ENCODE measurements at regions of chr7 and their contacts with region 1.

Region 1: DNA sequence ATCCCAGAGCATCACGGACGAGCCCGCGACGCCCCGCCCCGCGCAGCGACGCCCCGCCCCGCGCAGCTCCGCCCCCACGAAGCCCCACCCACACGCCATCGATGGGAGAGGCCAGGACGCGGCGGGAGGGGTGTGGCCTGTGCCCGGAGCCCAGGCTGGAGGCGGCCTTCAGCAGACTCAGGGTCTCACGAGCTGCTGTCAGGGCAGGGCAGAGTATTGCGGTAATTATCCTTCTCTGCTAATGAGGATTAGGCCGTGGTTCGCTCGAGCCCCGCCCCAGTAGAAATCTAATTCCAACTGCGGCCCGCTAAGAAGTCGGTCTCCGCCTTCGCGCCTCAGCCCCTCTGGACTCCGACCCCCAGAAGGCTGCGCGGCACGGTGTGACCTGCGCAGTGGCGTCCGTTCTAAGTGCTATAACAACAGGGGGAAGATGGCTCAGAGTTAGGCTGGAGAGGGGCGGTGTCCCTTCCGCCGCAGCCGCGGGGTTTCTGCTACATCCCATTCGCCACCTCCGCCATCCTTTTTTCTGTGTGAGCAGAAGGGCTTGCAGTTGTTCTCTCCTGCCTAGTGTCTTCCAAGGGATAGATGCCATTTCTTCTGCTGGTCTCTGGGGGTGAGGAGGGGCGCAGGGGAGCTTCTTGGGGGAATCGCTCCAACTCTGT is 337 bp upstream of the NT5C3A start:
- DNase-seq: peak; percentile 98
- ATAC-seq: peak; percentile 93
- H3K4me3 ChIP-seq: peak overlapping the region; percentile 19 to 92 (median 75)
- H3K4me3 Mint-ChIP-seq: peak overlapping the region; percentile 91
- H3K27ac ChIP-seq: peak overlapping the region; percentile 68 to 79
- H3K27ac Mint-ChIP-seq: peak overlapping the region; percentile 94
- H3K4me1 ChIP-seq: peaks cover 30% of the 10 kb centered on the region in 2 donors
- H3K4me1 Mint-ChIP-seq: peaks cover 39% of the 10 kb centered on the region
- H3K27me3 ChIP-seq: no peaks in the 10 kb centered on the region
- H3K27me3 Mint-ChIP-seq: no peaks in the 10 kb centered on the region
- CTCF ChIP-seq: no peak

Region 2: GRCh38 chr7:32490127-32490822 is 572.6 kb before region 1 on chr7 and contains the start of gene LSM5:
- CTCF ChIA-PET with region 1: interaction called, 3 read pairs
- POLR2A ChIA-PET with region 1: interaction called, 7 read pairs
- intact Hi-C with region 1: loop called (anchors 1 kb)
- DNase-seq: peak; percentile 94
- ATAC-seq: peak; percentile 57
- H3K4me3 ChIP-seq: peak within 1 kb of the TSS; percentile 81 to 97 (median 91)
- H3K4me3 Mint-ChIP-seq: peak within 1 kb of the TSS; percentile 91
- H3K27ac ChIP-seq: peak within 1 kb of the TSS; percentile 78 to 87
- H3K27ac Mint-ChIP-seq: peak within 1 kb of the TSS; percentile 91
- H3K4me1 ChIP-seq: peaks cover 8 to 16% of the 10 kb centered on the region in 2 donors
- H3K4me1 Mint-ChIP-seq: peaks cover 28% of the 10 kb centered on the region
- H3K27me3 ChIP-seq: no peaks in the 10 kb centered on the region
- H3K27me3 Mint-ChIP-seq: no peaks in the 10 kb centered on the region
- CTCF ChIP-seq: no peak
- total RNA-seq, gene LSM5: 32.1 and 34.7 TPM in 2 replicates

Region 3: GRCh38 chr7:32891800-32892520 is 171.0 kb before region 1 on chr7:
- CTCF ChIA-PET with region 1: interaction called, 3 read pairs
- POLR2A ChIA-PET with region 1: interaction called, 15 read pairs
- intact Hi-C with region 1: loop called (anchors 1 kb)
- DNase-seq: peak; percentile 99
- ATAC-seq: peak; percentile 64
- H3K4me3 ChIP-seq: peak overlapping the region; percentile 18 to 82 (median 74)
- H3K4me3 Mint-ChIP-seq: peak overlapping the region; percentile 87
- H3K27ac ChIP-seq: peak overlapping the region; percentile 98 to 100
- H3K27ac Mint-ChIP-seq: peak overlapping the region; percentile 96
- H3K4me1 ChIP-seq: peaks cover 36 to 39% of the 10 kb centered on the region in 2 donors
- H3K4me1 Mint-ChIP-seq: peaks cover 46% of the 10 kb centered on the region
- H3K27me3 ChIP-seq: no peaks in the 10 kb centered on the region
- H3K27me3 Mint-ChIP-seq: peaks cover 2% of the 10 kb centered on the region
- CTCF ChIP-seq: no peak

Region 4: GRCh38 chr7:33050535-33051318 is 12.2 kb before region 1 on chr7:
- CTCF ChIA-PET with region 1: interaction called, 18 read pairs
- POLR2A ChIA-PET with region 1: no interaction called
- intact Hi-C with region 1: loop called (anchors 1 kb)
- DNase-seq: peak; percentile 73
- ATAC-seq: peak; percentile 70
- H3K4me3 ChIP-seq: peak overlapping the region in 2 of 5 experiments; percentile 40 to 48
- H3K4me3 Mint-ChIP-seq: peak overlapping the region; percentile 29
- H3K27ac ChIP-seq: peak overlapping the region; percentile 60 to 83
- H3K27ac Mint-ChIP-seq: peak overlapping the region; percentile 28
- H3K4me1 ChIP-seq: peaks cover 39 to 47% of the 10 kb centered on the region in 2 donors
- H3K4me1 Mint-ChIP-seq: peaks cover 55% of the 10 kb centered on the region
- H3K27me3 ChIP-seq: no peaks in the 10 kb centered on the region
- H3K27me3 Mint-ChIP-seq: no peaks in the 10 kb centered on the region
- CTCF ChIP-seq: peak; percentile 76

Region 5: DNA sequence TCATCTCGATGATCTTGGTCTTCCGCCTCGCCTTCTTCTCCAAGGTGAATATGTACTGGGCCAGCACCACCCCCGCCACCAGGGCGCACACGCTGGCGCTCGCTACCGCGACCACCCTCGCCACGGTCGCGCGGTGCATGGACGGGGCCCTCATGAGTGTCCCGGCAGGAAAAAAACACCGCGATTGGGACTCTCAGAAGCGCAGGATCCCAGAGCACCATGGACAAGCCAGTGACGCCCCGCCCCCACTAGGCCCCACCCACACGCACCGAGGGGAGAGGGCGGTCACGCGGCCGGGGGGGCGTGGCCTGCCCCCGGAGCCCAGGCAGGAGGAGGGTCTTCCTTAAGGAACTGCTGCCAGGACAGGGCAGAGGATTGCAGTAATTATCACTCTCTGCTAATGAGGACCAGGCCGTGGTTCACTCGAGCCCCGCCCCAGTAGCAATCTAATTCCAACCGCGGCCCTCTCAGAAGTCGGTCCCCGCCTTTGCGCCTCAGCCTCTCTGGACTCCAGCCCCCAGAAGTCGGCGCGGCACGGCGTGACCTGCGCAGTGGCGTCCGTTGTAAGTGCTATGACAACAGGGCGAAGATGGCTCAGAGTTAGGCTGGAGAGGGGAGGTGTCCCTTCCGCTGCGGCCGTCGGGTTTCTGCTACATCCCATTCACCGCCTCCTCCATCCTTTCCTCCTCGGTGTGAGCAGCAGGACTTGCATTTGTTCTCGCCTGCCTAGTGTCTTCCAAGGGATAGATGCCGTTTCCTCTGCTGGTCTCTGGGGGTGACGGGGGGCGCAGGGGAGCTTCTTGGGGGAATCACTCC is 66.3 kb after region 1 on chr7 and contains the start of gene BBS9:
- CTCF ChIA-PET with region 1: no interaction called
- POLR2A ChIA-PET with region 1: no interaction called
- intact Hi-C with region 1: loop called (anchors 1 kb)
- DNase-seq: peak; percentile 96
- ATAC-seq: peak; percentile 91
- H3K4me3 ChIP-seq: peak within 1 kb of the TSS; percentile 39 to 81 (median 62)
- H3K4me3 Mint-ChIP-seq: peak within 1 kb of the TSS; percentile 97
- H3K27ac ChIP-seq: peak within 1 kb of the TSS; percentile 22 to 79
- H3K27ac Mint-ChIP-seq: peak within 1 kb of the TSS; percentile 91
- H3K4me1 ChIP-seq: peaks cover 7 to 9% of the 10 kb centered on the region in 2 donors
- H3K4me1 Mint-ChIP-seq: peaks cover 24% of the 10 kb centered on the region
- H3K27me3 ChIP-seq: no peaks in the 10 kb centered on the region
- H3K27me3 Mint-ChIP-seq: no peaks in the 10 kb centered on the region
- CTCF ChIP-seq: peak; percentile 18
- total RNA-seq, gene BBS9: 45.2 and 48.4 TPM in 2 replicates